ENCODE measurements at regions of chr7 and their contacts with region 1.

Region 1: GRCh38 chr7:142308326-142308725 is 50.5 kb upstream of the PRSS58 start:
- DNase-seq: no peak
- ATAC-seq: no peak
- H3K4me3 ChIP-seq: no peak overlapping the region
- H3K27ac ChIP-seq: no peak overlapping the region
- H3K4me1 ChIP-seq: no peaks in the 10 kb centered on the region
- H3K27me3 ChIP-seq: no peaks in the 10 kb centered on the region
- CTCF ChIP-seq: no peak

Region 2: GRCh38 chr7:142345811-142346210 is 37.5 kb after region 1 on chr7:
- intact Hi-C with region 1: loop called in 1 of 3 experiments (anchors 2 kb)
- DNase-seq: no peak
- ATAC-seq: no peak
- H3K4me3 ChIP-seq: no peak overlapping the region
- H3K27ac ChIP-seq: no peak overlapping the region
- H3K4me1 ChIP-seq: no peaks in the 10 kb centered on the region
- H3K27me3 ChIP-seq: no peaks in the 10 kb centered on the region
- CTCF ChIP-seq: no peak